H1 (cell line): ENCODE measurements at regions of chr22 and their contacts with region 1.

Region 1: GRCh38 chr22:41448189-41448808 is 1.7 kb upstream of the TOB2 start:
- DNase-seq: peak; percentile 87 to 97
- H3K4me3 ChIP-seq: peak overlapping the region; percentile 67 to 100 (median 96)
- H3K27ac ChIP-seq: peak overlapping the region; percentile 96
- H3K4me1 ChIP-seq: peaks cover 0 to 7% (median 4%) of the 10 kb centered on the region in 4 experiments; a peak in 5 of 7 replicates
- H3K27me3 ChIP-seq: no peaks in the 10 kb centered on the region
- CTCF ChIP-seq: no peak
- EP300 ChIP-seq: no peak
- POLR2A ChIP-seq: peak in 1 of 2 experiments; percentile 40; a peak in 1 of 3 replicates
- RAD21 ChIP-seq: 0 out of 4 replicates have a peak, but pooled peaks of 1 of the 2 experiments have one; percentile 3

Region 2: DNA sequence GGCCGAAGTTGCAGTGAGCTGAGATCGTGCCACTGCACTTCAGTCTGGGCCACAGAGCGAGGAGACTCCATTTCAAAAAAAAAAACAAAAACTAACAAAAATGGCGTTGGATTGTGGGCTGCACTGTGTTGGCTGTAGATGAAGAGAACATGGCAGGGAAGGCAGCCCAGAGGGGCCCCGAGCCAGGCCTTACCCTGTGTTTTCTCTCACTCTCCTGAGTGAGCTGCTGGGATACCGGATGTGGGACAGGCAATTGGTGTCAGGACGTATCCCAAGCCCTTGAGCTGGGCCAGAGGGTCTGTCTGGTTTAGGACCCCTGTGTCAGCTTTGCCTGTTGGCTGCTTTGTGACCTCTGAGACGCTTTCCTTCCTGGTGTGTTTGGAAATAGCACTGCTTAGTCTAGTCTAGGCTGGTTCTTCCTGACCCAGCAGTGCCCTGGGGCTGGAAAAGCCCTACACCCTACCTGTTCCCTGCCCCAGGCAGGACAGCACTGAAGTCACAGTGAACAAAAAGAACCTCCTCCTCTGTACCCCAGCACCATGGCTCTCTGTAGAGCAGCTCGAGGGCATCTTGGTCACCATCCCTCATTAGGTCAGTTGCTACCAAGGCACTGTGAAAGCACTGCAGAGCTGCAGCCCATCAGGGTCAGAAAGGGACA is 225.3 kb before region 1 on chr22:
- CTCF ChIA-PET with region 1: no interaction called
- POLR2A ChIA-PET with region 1: no interaction called
- DNase-seq: no peak
- H3K4me3 ChIP-seq: no peak overlapping the region
- H3K27ac ChIP-seq: no peak overlapping the region
- H3K4me1 ChIP-seq: peaks cover 0 to under 1% (median 0%) of the 10 kb centered on the region in 4 experiments; a peak in 1 of 7 replicates
- H3K27me3 ChIP-seq: no peaks in the 10 kb centered on the region
- CTCF ChIP-seq: no peak
- EP300 ChIP-seq: no peak
- POLR2A ChIP-seq: no peak
- RAD21 ChIP-seq: no peak

Region 3: DNA sequence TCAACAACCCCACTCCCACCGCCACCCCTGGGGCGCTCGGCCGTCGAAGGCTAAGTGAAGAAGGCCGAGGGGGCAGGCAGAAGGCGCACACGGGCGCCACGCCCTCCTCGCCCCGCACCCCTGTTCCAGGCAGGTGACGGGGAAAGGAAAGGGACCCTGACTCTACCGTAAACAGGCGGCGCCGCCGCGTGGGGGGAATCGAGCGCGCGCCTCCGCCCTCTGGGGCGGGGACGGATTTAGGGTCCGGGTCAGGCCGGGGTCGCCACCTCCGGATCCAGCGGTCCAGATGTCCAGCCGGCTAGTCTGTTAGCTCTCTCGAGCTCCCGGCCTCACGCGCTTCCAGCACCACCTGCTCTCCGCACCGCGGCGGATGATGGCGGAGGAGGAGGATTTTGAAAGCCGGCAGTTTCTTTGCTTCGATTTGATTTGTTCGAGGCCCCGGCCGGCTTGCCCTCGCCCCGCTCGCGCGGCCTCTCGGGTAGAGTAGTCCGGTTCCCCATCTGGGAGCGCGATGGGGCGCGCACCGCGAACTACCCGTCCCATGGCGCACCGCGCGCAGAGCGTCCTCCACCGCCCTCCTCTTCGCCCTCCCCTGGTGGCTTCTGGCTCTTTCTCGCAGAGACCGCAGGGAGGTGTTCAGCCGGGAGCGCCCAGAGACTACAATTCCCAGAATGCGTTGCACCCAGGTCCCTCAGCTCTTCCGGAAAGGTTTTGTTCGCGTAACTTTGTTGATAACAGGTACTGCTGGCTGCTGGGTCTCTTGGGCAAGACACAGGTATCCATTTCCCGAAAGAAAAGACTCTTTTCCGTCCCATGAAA is 162.3 kb before region 1 on chr22 and contains the start of gene RANGAP1:
- CTCF ChIA-PET with region 1: no interaction called
- POLR2A ChIA-PET with region 1: interaction called, 13 read pairs
- DNase-seq: peak; percentile 95
- H3K4me3 ChIP-seq: peak within 1 kb of the TSS; percentile 76 to 93 (median 82)
- H3K27ac ChIP-seq: peak within 1 kb of the TSS; percentile 67
- H3K4me1 ChIP-seq: peaks cover 2 to 20% (median 10%) of the 10 kb centered on the region in 4 experiments; a peak in 6 of 7 replicates
- H3K27me3 ChIP-seq: no peaks in the 10 kb centered on the region
- CTCF ChIP-seq: peak in 1 of 3 experiments; percentile 22; a peak in 1 of 4 replicates
- EP300 ChIP-seq: no peak
- POLR2A ChIP-seq: peak; percentile 83 to 94
- RAD21 ChIP-seq: no peak
- total RNA-seq, gene RANGAP1: 171 and 176 TPM in 2 replicates

Region 4: DNA sequence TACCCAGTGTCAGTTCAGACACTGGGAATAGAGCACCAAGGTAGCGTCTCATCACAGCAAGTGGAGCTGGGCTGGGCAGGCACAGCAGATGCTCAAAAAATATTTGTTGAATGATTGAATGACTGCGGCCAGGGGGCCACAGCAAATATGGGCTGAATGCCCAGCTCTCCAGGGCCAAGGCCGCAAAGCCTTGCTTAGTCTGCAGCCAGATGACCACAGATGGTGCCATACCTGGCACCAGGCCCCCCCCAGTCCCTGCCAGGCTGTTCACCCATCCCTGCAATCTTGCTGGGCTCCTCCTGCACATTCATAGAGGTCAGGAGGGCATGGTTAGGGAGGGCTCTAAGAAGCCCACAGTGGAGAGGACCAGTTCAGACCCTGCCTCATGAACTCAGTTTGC is 114.1 kb before region 1 on chr22:
- CTCF ChIA-PET with region 1: no interaction called
- POLR2A ChIA-PET with region 1: no interaction called
- DNase-seq: no peak
- H3K4me3 ChIP-seq: no peak overlapping the region
- H3K27ac ChIP-seq: no peak overlapping the region
- H3K4me1 ChIP-seq: peaks cover 0 to 8% (median 0%) of the 10 kb centered on the region in 4 experiments; a peak in 2 of 7 replicates
- H3K27me3 ChIP-seq: no peaks in the 10 kb centered on the region
- CTCF ChIP-seq: no peak
- EP300 ChIP-seq: no peak
- POLR2A ChIP-seq: no peak
- RAD21 ChIP-seq: no peak

Region 5: DNA sequence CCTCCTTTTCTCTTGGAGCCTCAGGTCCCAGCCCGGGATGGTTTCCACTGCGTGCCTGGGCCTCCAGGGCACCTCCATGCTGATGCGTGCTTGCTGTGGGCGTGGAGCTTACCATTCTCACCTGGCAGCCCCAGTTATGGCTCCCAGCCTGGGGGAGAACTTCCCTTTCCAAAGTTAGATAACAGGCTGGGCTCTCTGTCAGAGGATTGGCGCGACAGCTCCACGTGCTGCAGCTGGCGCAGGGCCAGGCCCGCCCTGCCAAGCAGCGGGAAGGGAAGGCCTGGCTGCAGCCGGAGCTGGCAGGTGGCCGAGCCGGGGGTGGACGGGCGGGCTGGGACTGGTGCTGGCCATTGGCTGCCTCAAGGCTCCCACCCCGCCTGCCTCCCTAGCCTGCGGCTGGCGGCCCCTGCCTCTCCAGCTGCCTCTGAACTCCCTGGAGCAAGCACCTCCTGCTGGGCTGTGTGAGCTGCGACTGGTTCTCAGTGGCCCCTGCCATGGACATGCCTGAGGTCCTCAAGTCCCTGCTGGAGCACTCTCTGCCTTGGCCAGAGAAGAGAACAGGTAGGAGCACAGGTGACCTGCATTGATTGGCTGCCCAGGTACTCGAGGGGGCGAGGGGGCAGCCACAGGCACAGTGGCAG is 81.1 kb before region 1 on chr22:
- CTCF ChIA-PET with region 1: no interaction called
- POLR2A ChIA-PET with region 1: no interaction called
- DNase-seq: peak in 1 of 2 experiments; percentile 66
- H3K4me3 ChIP-seq: no peak overlapping the region
- H3K27ac ChIP-seq: no peak overlapping the region
- H3K4me1 ChIP-seq: peaks cover 9 to 22% (median 15%) of the 10 kb centered on the region in 4 experiments
- H3K27me3 ChIP-seq: no peaks in the 10 kb centered on the region; a peak in 1 of 7 replicates
- CTCF ChIP-seq: no peak
- EP300 ChIP-seq: no peak
- POLR2A ChIP-seq: no peak
- RAD21 ChIP-seq: no peak

Region 6: DNA sequence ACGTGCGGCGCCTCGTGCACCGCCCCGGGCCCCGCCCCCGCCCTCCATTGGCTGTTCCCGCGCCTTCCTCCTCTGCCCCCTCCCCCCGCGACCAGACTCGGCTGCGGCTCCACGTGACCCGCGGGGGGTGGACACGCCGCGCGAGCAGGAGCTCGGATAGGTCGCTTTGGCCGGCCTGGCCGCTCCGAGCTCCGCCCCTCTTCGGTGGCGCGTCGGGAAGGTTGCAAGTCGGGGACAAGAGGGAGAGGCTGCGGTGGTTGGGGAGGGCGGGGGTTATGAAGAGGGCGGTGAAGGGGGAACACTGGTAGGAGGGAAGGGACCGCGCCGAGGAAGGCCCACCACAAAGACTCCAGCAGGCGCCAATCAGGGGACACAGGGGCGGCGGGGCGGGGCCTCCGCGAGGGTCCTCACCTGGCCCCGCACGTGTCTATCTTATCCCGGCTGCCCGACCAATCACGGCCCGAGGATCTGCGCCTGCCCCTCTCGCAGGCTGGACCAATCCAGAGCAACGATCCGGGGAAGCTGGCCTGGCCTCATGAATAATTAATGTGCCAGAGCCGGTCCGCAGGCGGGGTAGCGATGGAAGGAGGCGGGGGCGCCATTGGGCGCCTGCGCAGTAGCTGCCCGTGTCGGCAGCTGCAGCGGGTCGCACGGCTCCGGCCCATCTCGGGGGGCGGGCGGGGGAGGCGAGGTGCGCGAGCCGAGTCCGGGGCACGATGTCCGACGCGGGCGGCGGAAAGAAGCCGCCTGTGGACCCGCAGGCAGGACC is 66.8 kb before region 1 on chr22 and contains the start of gene TEF:
- CTCF ChIA-PET with region 1: no interaction called
- POLR2A ChIA-PET with region 1: interaction called, 55 read pairs
- DNase-seq: peak; percentile 97 to 98
- H3K4me3 ChIP-seq: peak within 1 kb of the TSS; percentile 66 to 79 (median 69)
- H3K27ac ChIP-seq: peak within 1 kb of the TSS; percentile 96
- H3K4me1 ChIP-seq: peaks cover 2 to 10% (median 5%) of the 10 kb centered on the region in 4 experiments
- H3K27me3 ChIP-seq: no peaks in the 10 kb centered on the region; a peak in 1 of 7 replicates
- CTCF ChIP-seq: no peak
- EP300 ChIP-seq: no peak
- POLR2A ChIP-seq: peak; percentile 24 to 54
- RAD21 ChIP-seq: no peak
- total RNA-seq, gene TEF: 7.4 and 8.9 TPM in 2 replicates

Region 7: GRCh38 chr22:41417622-41418390 is 30.5 kb before region 1 on chr22:
- CTCF ChIA-PET with region 1: interaction called, 5 read pairs
- POLR2A ChIA-PET with region 1: interaction called, 33 read pairs
- DNase-seq: no peak
- H3K4me3 ChIP-seq: no peak overlapping the region
- H3K27ac ChIP-seq: no peak overlapping the region
- H3K4me1 ChIP-seq: peaks cover 0 to 10% (median 9%) of the 10 kb centered on the region in 4 experiments; a peak in 6 of 7 replicates
- H3K27me3 ChIP-seq: no peaks in the 10 kb centered on the region; a peak in 1 of 7 replicates
- CTCF ChIP-seq: no peak
- EP300 ChIP-seq: no peak
- POLR2A ChIP-seq: no peak
- RAD21 ChIP-seq: no peak

Region 8: DNA sequence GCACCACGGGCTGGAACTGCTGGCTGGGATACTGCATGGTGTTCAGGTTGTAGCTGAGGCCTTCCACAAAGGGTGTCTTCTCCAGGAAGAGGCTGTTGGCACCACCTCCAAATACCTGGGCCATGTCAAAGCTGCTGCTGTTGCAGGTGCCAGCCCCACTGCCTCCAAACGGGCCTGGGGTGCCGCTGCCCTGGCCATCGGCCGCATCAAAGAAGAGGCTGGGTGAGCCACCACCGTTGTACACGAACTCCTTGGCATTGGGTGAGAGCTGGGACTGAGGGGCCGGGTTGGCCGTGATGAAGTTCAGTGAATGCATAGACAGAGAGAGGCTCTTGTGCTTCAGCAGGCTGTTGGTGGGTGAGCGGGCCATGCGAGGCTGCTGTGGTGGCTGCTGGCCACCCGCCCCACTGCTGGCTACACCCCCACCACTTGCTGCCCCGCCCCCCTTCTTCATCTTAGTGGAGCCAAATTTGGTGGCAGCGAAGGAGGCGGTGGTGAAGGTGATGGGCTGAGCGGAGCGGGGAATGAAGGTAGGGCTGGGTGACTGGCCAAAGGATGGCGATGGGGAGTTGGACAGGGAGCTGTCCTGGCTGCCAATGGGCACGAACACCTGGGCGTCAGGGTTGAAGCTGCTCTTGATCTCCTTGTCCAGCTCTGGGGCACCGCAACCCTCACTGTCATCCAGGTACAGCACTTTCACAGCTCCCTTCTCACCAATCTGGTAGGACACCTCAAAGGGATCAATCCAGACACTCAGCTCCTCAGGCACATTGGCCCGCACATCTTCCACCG is 11.8 kb before region 1 on chr22:
- CTCF ChIA-PET with region 1: interaction called, 3 read pairs
- POLR2A ChIA-PET with region 1: interaction called, 63 read pairs
- DNase-seq: no peak
- H3K4me3 ChIP-seq: no peak overlapping the region
- H3K27ac ChIP-seq: no peak overlapping the region
- H3K4me1 ChIP-seq: no peaks in the 10 kb centered on the region
- H3K27me3 ChIP-seq: no peaks in the 10 kb centered on the region
- CTCF ChIP-seq: no peak
- EP300 ChIP-seq: no peak
- POLR2A ChIP-seq: no peak; a peak in 1 of 3 replicates
- RAD21 ChIP-seq: no peak

Region 9: GRCh38 chr22:41501209-41501608 is 52.9 kb after region 1 on chr22:
- CTCF ChIA-PET with region 1: interaction called, 4 read pairs
- POLR2A ChIA-PET with region 1: interaction called, 26 read pairs
- DNase-seq: no peak
- H3K4me3 ChIP-seq: no peak overlapping the region
- H3K27ac ChIP-seq: no peak overlapping the region
- H3K4me1 ChIP-seq: no peaks in the 10 kb centered on the region
- H3K27me3 ChIP-seq: no peaks in the 10 kb centered on the region
- CTCF ChIP-seq: peak; percentile 57 to 64 (median 59)
- EP300 ChIP-seq: no peak
- POLR2A ChIP-seq: no peak
- RAD21 ChIP-seq: peak; percentile 75 to 78

Region 10: GRCh38 chr22:41526837-41527799 is 78.8 kb after region 1 on chr22:
- CTCF ChIA-PET with region 1: interaction called, 8 read pairs
- POLR2A ChIA-PET with region 1: interaction called, 22 read pairs
- DNase-seq: peak in 1 of 2 experiments; percentile 90
- H3K4me3 ChIP-seq: no peak overlapping the region
- H3K27ac ChIP-seq: no peak overlapping the region
- H3K4me1 ChIP-seq: no peaks in the 10 kb centered on the region; a peak in 1 of 7 replicates
- H3K27me3 ChIP-seq: no peaks in the 10 kb centered on the region
- CTCF ChIP-seq: peak; percentile 76 to 91 (median 85)
- EP300 ChIP-seq: no peak
- POLR2A ChIP-seq: peak in 1 of 2 experiments; percentile 62; a peak in 1 of 3 replicates
- RAD21 ChIP-seq: peak; percentile 70 to 76